Naive thymus-derived CD8-positive, alpha-beta T cell (primary cell): ENCODE measurements at regions of chr2 and their contacts with region 1.

Region 1: GRCh38 chr2:71243634-71244304 is 16.9 kb upstream of the PAIP2B start:
- DNase-seq: no peak
- ATAC-seq: no peak
- H3K4me3 Mint-ChIP-seq: no peak overlapping the region
- H3K27ac Mint-ChIP-seq: no peak overlapping the region
- H3K4me1 Mint-ChIP-seq: no peaks in the 10 kb centered on the region
- H3K27me3 Mint-ChIP-seq: peaks cover 11 to 24% (median 14%) of the 10 kb centered on the region in 5 donors

Region 2: DNA sequence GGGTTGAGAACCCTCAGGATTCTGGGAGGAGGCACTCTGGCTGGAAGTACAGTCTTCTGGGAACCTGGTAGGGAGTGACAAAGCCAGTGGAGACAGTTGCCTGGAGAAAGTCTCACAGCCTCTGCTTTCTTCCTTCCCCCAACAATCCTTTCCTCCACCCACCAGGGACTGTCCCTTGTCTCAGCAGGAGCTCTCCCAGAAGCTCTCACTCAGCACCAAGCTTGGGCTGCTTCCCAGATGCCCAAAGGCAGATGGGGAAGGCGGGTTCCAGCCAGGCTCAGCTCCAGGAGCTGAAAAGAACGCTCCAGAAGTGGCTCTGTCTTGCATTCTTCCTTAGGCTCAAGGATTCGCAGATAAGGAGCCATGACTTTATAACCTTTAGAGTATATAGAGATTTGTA is 182.9 kb before region 1 on chr2:
- POLR2A ChIA-PET with region 1: interaction called, 11 read pairs
- DNase-seq: no peak
- ATAC-seq: no peak
- H3K4me3 Mint-ChIP-seq: no peak overlapping the region
- H3K27ac Mint-ChIP-seq: no peak overlapping the region
- H3K4me1 Mint-ChIP-seq: peaks cover 0 to 20% (median 0%) of the 10 kb centered on the region in 4 donors
- H3K27me3 Mint-ChIP-seq: peaks cover 5 to 21% (median 16%) of the 10 kb centered on the region in 5 donors

Region 3: DNA sequence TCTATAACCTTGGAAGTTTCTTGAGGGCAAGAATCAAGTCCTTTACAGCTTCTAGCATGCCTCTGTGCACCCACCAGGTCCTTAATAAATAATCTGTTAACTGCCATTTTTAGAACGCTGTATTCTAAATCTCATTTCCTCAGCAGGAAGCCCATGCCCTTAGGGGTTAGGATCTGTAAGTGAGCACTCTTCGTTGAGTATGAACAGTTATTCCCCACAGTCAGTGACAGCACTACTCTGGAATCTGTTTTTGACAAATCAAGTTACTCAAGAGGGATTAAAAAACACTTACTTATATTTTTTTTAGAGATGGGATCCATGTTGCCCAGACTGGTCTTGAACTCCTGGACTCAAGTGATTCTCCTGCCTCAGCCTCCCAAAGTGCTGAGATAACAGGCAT is 31.4 kb before region 1 on chr2:
- POLR2A ChIA-PET with region 1: no interaction called
- DNase-seq: no peak
- ATAC-seq: no peak
- H3K4me3 Mint-ChIP-seq: no peak overlapping the region
- H3K27ac Mint-ChIP-seq: no peak overlapping the region
- H3K4me1 Mint-ChIP-seq: peaks cover 0 to 3% (median 0%) of the 10 kb centered on the region in 4 donors
- H3K27me3 Mint-ChIP-seq: no peaks in the 10 kb centered on the region